ENCODE measurements at regions of chr17 and their contacts with region 1.

Region 1: DNA sequence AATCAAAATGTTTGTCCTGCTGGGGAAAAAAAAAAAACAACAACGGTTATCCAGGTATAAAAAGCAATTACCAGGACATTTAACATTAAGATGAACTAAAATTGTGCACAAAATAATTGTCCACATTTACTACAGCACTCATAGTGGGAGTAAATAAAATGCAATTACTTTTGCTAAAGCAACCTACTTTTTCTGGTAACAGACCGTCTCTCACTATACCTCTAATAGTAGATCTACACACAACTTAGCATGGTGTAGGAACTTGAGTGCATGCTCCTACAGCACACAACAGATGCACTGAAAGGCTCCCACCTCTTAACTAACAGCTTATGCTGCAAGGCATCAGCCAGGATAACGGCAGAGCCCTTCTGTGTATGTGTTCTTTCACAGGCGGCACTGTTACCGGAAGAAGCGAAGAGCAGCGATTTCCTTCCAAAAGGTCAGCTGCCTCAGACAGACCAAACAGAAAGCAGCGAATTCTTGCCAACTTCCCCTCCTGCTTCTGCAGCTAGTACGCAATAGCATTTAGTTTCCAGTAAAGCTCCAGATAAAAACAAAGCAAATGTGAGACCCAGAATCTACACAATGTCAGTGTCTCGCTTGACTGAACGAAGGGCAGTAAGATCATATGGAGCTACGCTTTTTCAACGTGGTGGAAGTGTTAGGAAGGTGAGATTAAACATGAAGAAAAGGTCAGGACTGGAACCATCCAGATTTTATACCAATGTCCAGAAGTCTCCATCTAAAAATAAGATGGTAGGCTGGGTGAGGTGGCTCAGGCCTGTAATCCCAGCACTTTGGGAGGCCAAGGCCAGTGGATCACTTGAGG is 27.6 kb downstream of the STAT5B start:
- DNase-seq: peak; percentile 90 to 97 (median 96)
- H3K4me3 ChIP-seq: peak overlapping the region in 6 of 7 experiments; percentile 37 to 65 (median 56)
- H3K27ac ChIP-seq: peak overlapping the region; percentile 36 to 82
- H3K4me1 ChIP-seq: peaks cover 28 to 77% (median 52%) of the 10 kb centered on the region in 4 experiments
- H3K27me3 ChIP-seq: no peaks in the 10 kb centered on the region

Region 2: GRCh38 chr17:42230225-42230624 is 18.3 kb before region 1 on chr17:
- CTCF ChIA-PET with region 1: interaction called, 66 read pairs
- POLR2A ChIA-PET with region 1: no interaction called
- DNase-seq: no peak
- H3K4me3 ChIP-seq: no peak overlapping the region
- H3K27ac ChIP-seq: peak overlapping the region in 1 of 2 experiments; percentile 2
- H3K4me1 ChIP-seq: peaks cover 0 to 20% (median 3%) of the 10 kb centered on the region in 4 experiments
- H3K27me3 ChIP-seq: no peaks in the 10 kb centered on the region

Region 3: DNA sequence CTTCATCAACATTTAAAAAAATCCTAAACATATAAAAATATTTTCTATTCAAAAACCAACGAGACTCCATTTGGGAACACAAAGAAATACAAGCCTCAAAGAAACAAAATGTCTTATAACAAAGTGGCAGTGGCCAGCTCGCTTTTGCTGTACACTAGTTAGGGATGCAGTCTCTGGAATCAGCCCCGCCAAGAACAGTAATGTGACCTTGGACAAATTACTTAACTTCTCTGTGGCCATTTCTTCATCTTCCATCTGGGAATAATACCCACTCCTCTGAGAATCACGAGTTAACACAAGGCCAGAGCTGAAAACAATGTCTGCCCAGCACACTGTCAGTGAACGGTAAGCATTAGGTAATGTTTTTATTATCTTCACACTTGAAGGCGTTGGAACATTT is 22.0 kb after region 1 on chr17:
- CTCF ChIA-PET with region 1: interaction called, 10 read pairs
- POLR2A ChIA-PET with region 1: interaction called, 5 read pairs
- DNase-seq: no peak
- H3K4me3 ChIP-seq: no peak overlapping the region
- H3K27ac ChIP-seq: no peak overlapping the region
- H3K4me1 ChIP-seq: peaks cover 36 to 58% (median 42%) of the 10 kb centered on the region in 4 experiments
- H3K27me3 ChIP-seq: no peaks in the 10 kb centered on the region